Caco-2 (cell line): ENCODE measurements at regions of chr11 and their contacts with region 1.

Region 1: DNA sequence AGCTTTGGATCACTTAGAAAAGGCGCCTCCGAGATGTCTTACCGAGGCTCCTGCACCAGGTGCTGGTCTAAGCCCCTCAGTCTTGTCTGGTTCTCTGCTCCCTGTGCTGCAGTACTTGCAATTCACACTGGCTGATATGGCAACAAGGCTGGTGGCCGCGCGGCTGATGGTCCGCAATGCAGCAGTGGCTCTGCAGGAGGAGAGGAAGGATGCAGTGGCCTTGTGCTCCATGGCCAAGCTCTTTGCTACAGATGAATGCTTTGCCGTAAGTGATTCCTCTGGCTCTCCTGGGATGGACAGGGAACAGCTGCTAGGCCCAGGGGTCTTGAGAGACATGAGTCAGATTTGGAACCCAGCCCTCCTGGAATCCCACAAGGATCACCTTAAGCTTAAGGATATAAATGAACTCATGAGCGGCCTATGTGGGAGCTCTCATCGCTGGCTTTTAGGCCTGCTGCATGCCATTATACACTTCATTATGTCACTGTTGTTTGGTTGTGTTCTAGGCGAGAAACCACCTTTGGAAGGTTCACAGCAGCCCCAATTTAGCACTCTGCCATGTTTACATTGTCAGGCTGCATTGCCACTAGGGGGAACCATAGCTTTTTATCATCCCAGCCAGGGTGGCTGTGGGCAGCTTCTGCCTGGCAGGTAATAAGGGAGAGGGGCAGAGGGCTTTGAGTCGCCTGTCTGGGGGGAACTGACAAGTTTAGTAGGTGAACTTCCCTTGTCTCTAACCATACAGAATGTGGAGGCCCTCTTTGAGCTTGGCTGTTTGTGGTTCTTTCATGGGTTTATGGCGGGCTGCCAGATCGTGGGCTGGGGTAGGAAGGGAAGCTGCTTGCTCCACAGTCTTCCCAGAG is 8.5 kb downstream of the ACAD8 start:
- DNase-seq: peak; percentile 26 to 72
- H3K4me3 ChIP-seq: no peak overlapping the region
- H3K4me3 Mint-ChIP-seq: no peak overlapping the region
- H3K27ac Mint-ChIP-seq: no peak overlapping the region
- H3K4me1 ChIP-seq: no peaks in the 10 kb centered on the region
- H3K4me1 Mint-ChIP-seq: no peaks in the 10 kb centered on the region
- H3K27me3 ChIP-seq: no peaks in the 10 kb centered on the region
- H3K27me3 Mint-ChIP-seq: no peaks in the 10 kb centered on the region
- CTCF ChIP-seq: peak; percentile 79 to 95

Region 2: DNA sequence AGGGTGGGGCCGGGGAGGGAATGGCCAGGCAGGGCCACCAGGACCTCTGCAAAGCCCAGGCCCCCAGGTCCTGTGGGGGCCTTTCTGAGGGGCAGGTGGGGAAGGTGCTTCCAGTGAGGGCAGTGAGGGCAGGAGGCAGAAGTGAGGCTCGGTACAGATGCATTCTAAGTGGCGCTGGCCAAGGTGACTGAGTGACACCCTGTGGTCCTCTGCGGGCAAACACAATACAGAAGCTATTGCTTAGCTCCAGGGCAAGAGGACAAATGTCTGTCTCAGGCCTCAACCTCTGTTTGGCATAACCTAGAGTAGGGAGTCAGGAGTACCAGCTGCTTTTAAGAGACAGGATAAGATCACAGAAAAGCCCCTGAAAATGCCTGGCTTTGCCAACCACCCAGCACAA is 118.9 kb after region 1 on chr11:
- CTCF ChIA-PET with region 1: interaction called, 15 read pairs
- POLR2A ChIA-PET with region 1: no interaction called
- intact Hi-C with region 1: loop called (anchors 2 kb)
- DNase-seq: peak in 1 of 2 experiments; percentile 30
- H3K4me3 ChIP-seq: no peak overlapping the region
- H3K4me3 Mint-ChIP-seq: no peak overlapping the region
- H3K27ac Mint-ChIP-seq: no peak overlapping the region
- H3K4me1 ChIP-seq: no peaks in the 10 kb centered on the region
- H3K4me1 Mint-ChIP-seq: no peaks in the 10 kb centered on the region
- H3K27me3 ChIP-seq: no peaks in the 10 kb centered on the region; the same call in 1 of the 2 replicates
- H3K27me3 Mint-ChIP-seq: peaks cover 34% of the 10 kb centered on the region
- CTCF ChIP-seq: peak in 1 of 2 experiments; percentile 51

Region 3: GRCh38 chr11:134861490-134862104 is 599.7 kb after region 1 on chr11:
- CTCF ChIA-PET with region 1: no interaction called
- POLR2A ChIA-PET with region 1: no interaction called
- intact Hi-C with region 1: loop called (anchors 10 kb)
- DNase-seq: no peak
- H3K4me3 ChIP-seq: no peak overlapping the region
- H3K4me3 Mint-ChIP-seq: no peak overlapping the region
- H3K27ac Mint-ChIP-seq: peak overlapping the region; percentile 99
- H3K4me1 ChIP-seq: peaks cover 33% of the 10 kb centered on the region
- H3K4me1 Mint-ChIP-seq: peaks cover 40% of the 10 kb centered on the region
- H3K27me3 ChIP-seq: no peaks in the 10 kb centered on the region
- H3K27me3 Mint-ChIP-seq: no peaks in the 10 kb centered on the region
- CTCF ChIP-seq: peak; percentile 10 to 50